A549 (cell line): ENCODE measurements at regions of chr3 and their contacts with region 1.

Region 1: GRCh38 chr3:38521391-38521987 is 25.3 kb downstream of the EXOG start:
- DNase-seq: peak; percentile 47 to 73
- ATAC-seq: peak; percentile 63 to 82; a peak in 5 of 6 replicates
- H3K4me3 ChIP-seq: no peak overlapping the region
- H3K27ac ChIP-seq: no peak overlapping the region
- H3K4me1 ChIP-seq: no peaks in the 10 kb centered on the region; the same call in 2 of the 3 replicates
- CTCF ChIP-seq: peak; percentile 94
- EP300 ChIP-seq: no peak
- POLR2A ChIP-seq: no peak
- RAD21 ChIP-seq: peak; percentile 69 to 78

Region 2: DNA sequence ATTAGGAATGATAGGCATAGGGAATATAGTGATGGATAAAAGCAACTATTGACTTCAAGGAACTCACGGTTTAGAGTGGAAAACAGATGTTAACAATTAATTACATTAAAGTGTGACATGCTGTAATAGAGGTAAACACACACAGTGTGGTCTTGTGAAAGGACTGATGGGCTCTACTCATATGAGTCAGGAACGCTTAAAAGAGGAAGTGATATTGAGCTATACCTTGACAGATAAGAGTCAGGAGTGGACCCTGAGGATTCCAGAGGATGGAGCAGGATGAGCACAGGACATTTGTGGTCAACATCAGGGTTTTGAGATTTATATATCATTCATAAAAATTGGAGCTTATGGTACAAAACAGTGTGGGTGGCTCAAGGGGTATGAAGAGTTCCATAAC is 14.4 kb before region 1 on chr3:
- CTCF ChIA-PET with region 1: interaction called, 31 read pairs
- POLR2A ChIA-PET with region 1: no interaction called
- DNase-seq: no peak
- ATAC-seq: no peak
- H3K4me3 ChIP-seq: no peak overlapping the region
- H3K27ac ChIP-seq: no peak overlapping the region
- H3K4me1 ChIP-seq: no peaks in the 10 kb centered on the region
- CTCF ChIP-seq: no peak
- EP300 ChIP-seq: no peak
- POLR2A ChIP-seq: no peak
- RAD21 ChIP-seq: no peak

Region 3: DNA sequence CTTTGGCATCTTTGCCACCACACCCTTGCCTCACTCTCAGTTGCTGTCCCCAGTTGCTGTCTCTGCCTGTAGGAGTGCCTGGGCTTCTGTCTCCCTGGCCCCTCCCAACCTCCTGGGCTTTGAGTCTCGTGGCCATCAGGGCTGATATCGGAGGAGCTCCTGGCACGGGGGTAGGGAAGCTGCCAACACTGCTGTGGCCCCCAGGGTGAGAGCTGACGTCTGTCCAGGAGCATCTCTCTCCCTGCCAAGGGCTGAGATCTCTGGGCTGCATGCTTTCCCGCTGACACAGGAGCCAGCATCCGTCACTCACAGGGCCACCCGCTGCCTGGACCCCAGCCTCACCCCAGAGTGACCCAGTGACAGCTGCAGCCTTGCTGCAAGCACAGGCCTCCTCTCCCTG is 22.1 kb after region 1 on chr3:
- CTCF ChIA-PET with region 1: interaction called, 11 read pairs
- POLR2A ChIA-PET with region 1: no interaction called
- DNase-seq: no peak
- ATAC-seq: no peak
- H3K4me3 ChIP-seq: no peak overlapping the region
- H3K27ac ChIP-seq: no peak overlapping the region
- H3K4me1 ChIP-seq: no peaks in the 10 kb centered on the region
- CTCF ChIP-seq: no peak
- EP300 ChIP-seq: no peak
- POLR2A ChIP-seq: no peak
- RAD21 ChIP-seq: no peak

Region 4: DNA sequence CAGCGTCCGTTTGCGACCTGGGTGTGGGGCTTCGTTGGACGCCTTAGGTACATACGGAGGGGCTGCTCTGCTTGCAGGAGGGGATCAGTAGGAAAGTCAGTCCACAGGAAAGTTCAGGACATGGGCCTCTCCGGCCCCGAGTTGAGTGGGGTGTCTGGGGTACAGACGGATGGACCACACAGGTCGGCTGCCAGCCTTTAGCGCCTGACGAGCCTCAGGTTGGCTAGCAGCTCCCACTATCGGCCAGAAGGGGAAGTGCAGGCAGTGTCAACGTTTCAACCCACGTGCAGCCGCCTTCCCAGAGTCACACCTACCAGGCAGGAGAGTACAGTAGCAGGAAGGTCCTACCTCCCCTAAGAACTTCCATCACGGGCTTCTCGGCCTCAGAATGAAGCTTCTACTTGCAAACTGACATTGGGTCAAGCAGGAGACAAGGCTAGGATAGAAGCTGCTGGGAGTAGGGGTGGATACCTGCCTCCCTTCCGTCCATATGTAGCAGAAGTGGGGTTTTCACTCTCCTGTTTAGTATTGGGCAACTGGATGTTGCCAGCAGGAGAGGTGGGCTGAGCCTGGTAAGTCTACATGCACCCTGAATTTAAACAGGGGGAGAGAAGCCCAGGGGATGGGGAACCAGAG is 129.8 kb after region 1 on chr3:
- CTCF ChIA-PET with region 1: interaction called, 76 read pairs
- POLR2A ChIA-PET with region 1: no interaction called
- DNase-seq: peak; percentile 61 to 68
- ATAC-seq: peak; percentile 38 to 74; a peak in 5 of 6 replicates
- H3K4me3 ChIP-seq: no peak overlapping the region
- H3K27ac ChIP-seq: no peak overlapping the region
- H3K4me1 ChIP-seq: no peaks in the 10 kb centered on the region
- CTCF ChIP-seq: peak; percentile 76
- EP300 ChIP-seq: no peak
- POLR2A ChIP-seq: no peak
- RAD21 ChIP-seq: peak; percentile 60 to 68

Region 5: GRCh38 chr3:39000008-39000450 is 478.5 kb after region 1 on chr3:
- CTCF ChIA-PET with region 1: interaction called, 55 read pairs
- POLR2A ChIA-PET with region 1: no interaction called
- DNase-seq: peak; percentile 60 to 74
- ATAC-seq: peak; percentile 85 to 90
- H3K4me3 ChIP-seq: no peak overlapping the region
- H3K27ac ChIP-seq: no peak overlapping the region
- H3K4me1 ChIP-seq: no peaks in the 10 kb centered on the region
- CTCF ChIP-seq: peak; percentile 96
- EP300 ChIP-seq: no peak
- POLR2A ChIP-seq: no peak
- RAD21 ChIP-seq: peak; percentile 83 to 87